ENCODE measurements at regions of chr21 and their contacts with region 1.

Region 1: DNA sequence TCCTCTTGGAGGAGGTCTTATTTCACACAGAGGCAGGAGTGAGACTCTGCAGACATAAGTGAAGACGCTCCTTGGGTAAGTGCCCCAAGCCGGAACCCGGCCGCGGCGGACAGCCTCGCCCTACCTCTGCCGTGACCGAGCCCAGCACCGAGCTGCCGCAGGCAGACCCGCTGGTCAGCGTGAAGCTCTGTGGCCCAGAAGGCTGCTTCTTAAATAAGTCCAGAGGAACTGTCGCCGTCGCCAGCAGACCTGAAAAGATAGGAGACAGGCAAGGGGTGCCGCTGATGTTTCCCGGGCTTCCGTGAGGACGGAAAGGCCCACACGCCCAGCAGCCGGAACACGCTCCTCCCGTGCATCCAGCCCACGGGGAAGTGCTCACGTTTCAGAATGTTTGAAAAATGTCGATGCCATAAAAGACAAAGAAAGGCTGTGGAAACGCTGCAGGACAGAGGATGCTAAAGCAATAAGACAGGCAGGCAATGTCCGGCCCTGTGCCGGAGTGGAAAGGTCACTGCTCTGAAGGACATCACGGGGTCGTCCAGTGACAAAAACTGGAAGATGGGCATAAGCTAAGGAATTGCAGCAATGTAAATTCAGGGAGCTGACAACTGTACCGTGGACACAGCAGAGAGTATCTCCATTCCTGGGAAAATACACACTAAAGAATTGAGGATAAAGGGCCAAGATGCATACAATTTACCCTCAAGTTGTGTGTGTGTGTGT is 28.6 kb upstream of the PRDM15 start:
- DNase-seq: no peak
- ATAC-seq: no peak
- H3K4me3 ChIP-seq: no peak overlapping the region
- H3K27ac ChIP-seq: no peak overlapping the region
- H3K4me1 ChIP-seq: no peaks in the 10 kb centered on the region
- H3K27me3 ChIP-seq: no peaks in the 10 kb centered on the region
- CTCF ChIP-seq: no peak
- POLR2A ChIP-seq: no peak
- RAD21 ChIP-seq: no peak

Region 2: DNA sequence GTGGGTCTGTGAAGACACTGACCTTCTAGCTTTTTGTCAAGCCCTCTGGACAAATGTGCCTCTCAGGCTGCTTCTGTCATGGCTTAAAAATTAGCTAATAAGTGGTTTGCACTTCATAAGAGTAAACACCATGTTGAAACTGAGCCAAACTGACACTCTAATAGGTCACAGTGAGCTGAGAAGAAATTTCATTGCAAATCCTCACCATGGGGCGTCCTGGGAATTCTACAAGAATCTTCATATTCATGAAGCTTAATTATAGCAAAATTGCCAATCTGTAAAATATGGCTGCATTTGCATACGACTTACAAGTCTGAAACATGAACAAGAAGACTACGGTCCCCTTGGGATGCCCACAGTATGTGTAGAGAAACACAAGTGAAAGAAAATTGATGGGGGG is 1249.4 kb before region 1 on chr21:
- CTCF ChIA-PET with region 1: no interaction called
- POLR2A ChIA-PET with region 1: no interaction called
- dilution Hi-C with region 1: no loop called
- in situ Hi-C with region 1: no loop called
- intact Hi-C with region 1: no loop called
- DNase-seq: no peak
- ATAC-seq: no peak
- H3K4me3 ChIP-seq: no peak overlapping the region
- H3K27ac ChIP-seq: no peak overlapping the region
- H3K4me1 ChIP-seq: no peaks in the 10 kb centered on the region
- H3K27me3 ChIP-seq: no peaks in the 10 kb centered on the region
- CTCF ChIP-seq: no peak
- POLR2A ChIP-seq: no peak
- RAD21 ChIP-seq: no peak

Region 3: DNA sequence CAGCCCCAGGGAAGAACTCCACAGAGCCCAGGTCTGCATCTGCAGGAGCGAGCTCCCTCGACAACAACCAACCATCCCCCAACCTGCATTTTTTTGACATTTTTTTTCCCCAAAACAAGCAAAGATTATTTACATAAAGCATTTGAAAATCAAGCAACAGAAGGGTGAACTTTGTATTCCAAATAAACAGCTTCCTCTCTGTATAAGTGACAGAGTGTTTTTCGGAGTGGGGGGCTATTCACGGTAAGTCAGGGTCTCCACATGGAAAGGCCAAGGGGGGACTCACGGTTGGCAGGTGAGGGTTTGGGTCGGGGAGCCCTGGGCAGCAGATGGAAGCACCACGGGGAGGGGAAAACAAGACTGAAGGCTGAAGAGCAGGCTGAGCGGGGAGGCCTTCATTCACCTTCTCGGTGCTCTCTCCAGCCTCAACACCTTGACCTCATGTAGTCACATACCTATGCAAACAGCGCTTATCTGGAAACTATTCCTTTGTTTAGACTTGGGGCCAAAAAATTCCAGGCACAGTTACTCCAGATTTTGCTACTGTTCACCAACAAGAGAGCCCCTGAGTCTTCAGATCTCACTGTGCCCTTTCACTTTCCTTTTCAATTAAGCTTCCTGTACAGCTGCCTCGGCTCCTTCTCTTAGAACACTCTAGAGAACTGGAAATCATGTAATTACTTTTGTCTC is 18.6 kb after region 1 on chr21:
- CTCF ChIA-PET with region 1: no interaction called
- POLR2A ChIA-PET with region 1: interaction called, 15 read pairs
- dilution Hi-C with region 1: no loop called
- in situ Hi-C with region 1: no loop called
- intact Hi-C with region 1: no loop called
- DNase-seq: peak; percentile 66
- ATAC-seq: peak; percentile 77
- H3K4me3 ChIP-seq: peak overlapping the region; percentile 52
- H3K27ac ChIP-seq: peak overlapping the region; percentile 96
- H3K4me1 ChIP-seq: peaks cover 17% of the 10 kb centered on the region
- H3K27me3 ChIP-seq: no peaks in the 10 kb centered on the region
- CTCF ChIP-seq: no peak
- POLR2A ChIP-seq: no peak
- RAD21 ChIP-seq: no peak

Measured in IMR-90 (cell line).